HCT116 (cell line): ENCODE measurements at regions of chr6 and their contacts with region 1.

Region 1: GRCh38 chr6:73653571-73654424 is at the start of gene SLC17A5:
- DNase-seq: peak; percentile 86
- ATAC-seq: peak; percentile 84
- H3K4me3 ChIP-seq: peak within 1 kb of the TSS; percentile 68 to 76
- H3K27ac ChIP-seq: peak within 1 kb of the TSS; percentile 93
- H3K4me1 ChIP-seq: peaks cover 50 to 74% of the 10 kb centered on the region in 2 experiments
- H3K27me3 ChIP-seq: no peaks in the 10 kb centered on the region
- CTCF ChIP-seq: no peak
- POLR2A ChIP-seq: peak; percentile 41
- RAD21 ChIP-seq: no peak
- total RNA-seq, gene SLC17A5: 17.0 TPM

Region 2: DNA sequence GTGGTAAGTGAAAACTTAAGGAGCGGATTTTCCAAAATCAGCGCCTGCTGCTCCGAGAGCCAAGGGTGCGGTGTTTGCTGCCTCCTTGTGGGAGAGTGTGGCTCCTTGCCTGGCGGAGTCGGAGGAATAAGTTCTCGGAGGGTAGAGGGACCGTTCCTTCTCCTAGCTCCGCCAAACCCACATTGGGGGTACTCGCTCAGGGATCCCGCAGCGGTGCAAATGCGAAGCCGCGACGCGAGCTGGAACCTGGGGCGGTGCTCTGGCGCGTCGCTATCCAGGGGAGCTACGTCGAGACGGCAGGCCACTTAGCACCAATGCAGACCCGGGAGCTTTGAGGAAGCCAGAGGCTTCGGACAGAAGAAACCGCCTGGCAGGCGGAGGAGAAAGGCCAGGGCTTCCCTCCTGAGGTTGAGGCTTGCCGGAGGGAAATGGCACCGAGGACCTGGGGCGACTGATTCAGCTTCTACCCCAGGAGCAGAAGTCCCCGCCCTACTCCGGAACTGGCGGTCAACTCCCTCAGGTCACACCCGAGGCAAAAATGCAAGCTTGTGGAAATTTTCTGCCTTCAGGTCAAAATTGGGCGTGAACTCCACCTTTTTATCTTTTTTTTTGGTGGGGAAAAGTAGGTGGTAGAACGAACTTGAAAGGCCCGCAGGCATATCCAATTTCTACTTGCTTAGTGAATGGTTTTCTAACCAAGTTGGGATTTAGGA is 264.8 kb before region 1 on chr6:
- CTCF ChIA-PET with region 1: interaction called, 6 read pairs
- POLR2A ChIA-PET with region 1: interaction called, 5 read pairs
- RAD21 ChIA-PET with region 1: no interaction called
- intact Hi-C with region 1: loop called (anchors 2 kb)
- DNase-seq: peak; percentile 70
- ATAC-seq: peak; percentile 85
- H3K4me3 ChIP-seq: peak overlapping the region; percentile 52 to 66
- H3K27ac ChIP-seq: peak overlapping the region; percentile 90
- H3K4me1 ChIP-seq: peaks cover 19 to 39% of the 10 kb centered on the region in 2 experiments
- H3K27me3 ChIP-seq: no peaks in the 10 kb centered on the region
- CTCF ChIP-seq: peak; percentile 53 to 85 (median 75); a peak in 5 of 6 replicates
- POLR2A ChIP-seq: peak; percentile 64
- RAD21 ChIP-seq: peak; percentile 84

Region 3: GRCh38 chr6:73520688-73521350 is 133.0 kb before region 1 on chr6 and contains the start of gene EEF1A1:
- CTCF ChIA-PET with region 1: interaction called, 3 read pairs
- POLR2A ChIA-PET with region 1: interaction called, 33 read pairs
- RAD21 ChIA-PET with region 1: interaction called in 1 of 2 experiments, 4 read pairs
- intact Hi-C with region 1: loop called (anchors 1 kb)
- DNase-seq: peak; percentile 99
- ATAC-seq: peak; percentile 76
- H3K4me3 ChIP-seq: peak within 1 kb of the TSS; percentile 91 to 99
- H3K27ac ChIP-seq: peak within 1 kb of the TSS; percentile 97
- H3K4me1 ChIP-seq: peaks cover 18 to 59% of the 10 kb centered on the region in 2 experiments; a peak in 3 of 4 replicates
- H3K27me3 ChIP-seq: no peaks in the 10 kb centered on the region
- CTCF ChIP-seq: no peak
- POLR2A ChIP-seq: peak; percentile 98
- RAD21 ChIP-seq: no peak
- total RNA-seq, gene EEF1A1: 12,560 TPM

Region 4: DNA sequence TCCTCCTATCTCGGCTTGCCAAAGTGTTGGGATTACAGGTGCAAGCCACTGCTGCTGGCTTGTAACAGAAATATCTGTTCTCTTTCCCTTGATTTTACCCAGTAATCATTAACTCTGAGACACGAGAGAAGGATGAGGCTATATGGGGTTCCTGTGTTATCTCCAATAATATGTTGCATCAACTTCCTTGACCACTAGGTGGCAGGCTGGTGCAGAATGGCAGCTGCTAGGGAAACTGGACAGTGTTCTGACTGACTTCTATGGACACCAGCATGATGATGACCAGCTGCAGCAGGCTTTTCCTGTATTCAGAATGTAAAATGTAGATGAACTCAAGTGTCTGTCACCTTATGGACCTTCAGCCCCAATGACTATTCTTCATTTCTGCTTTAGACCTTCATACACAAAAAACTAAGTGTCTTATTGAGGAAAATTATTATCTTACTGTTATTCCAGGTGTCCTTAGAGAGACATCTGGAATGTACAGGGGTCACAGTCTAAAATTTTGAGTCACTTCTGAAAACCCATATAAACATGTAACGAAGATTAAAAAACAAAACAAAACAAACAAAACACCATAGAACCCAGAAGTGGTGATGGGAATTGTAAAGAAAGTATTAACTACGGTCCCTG is 21.8 kb after region 1 on chr6:
- CTCF ChIA-PET with region 1: interaction called, 10 read pairs
- POLR2A ChIA-PET with region 1: no interaction called
- RAD21 ChIA-PET with region 1: no interaction called
- intact Hi-C with region 1: no loop called
- DNase-seq: peak; percentile 67
- ATAC-seq: peak; percentile 95
- H3K4me3 ChIP-seq: no peak overlapping the region
- H3K27ac ChIP-seq: no peak overlapping the region
- H3K4me1 ChIP-seq: peaks cover 16 to 28% of the 10 kb centered on the region in 2 experiments
- H3K27me3 ChIP-seq: no peaks in the 10 kb centered on the region
- CTCF ChIP-seq: peak; percentile 85 to 91 (median 88)
- POLR2A ChIP-seq: no peak
- RAD21 ChIP-seq: peak; percentile 91